WTC11 (cell line): ENCODE measurements at regions of chr7 and their contacts with region 1.

Region 1: GRCh38 chr7:28062197-28062991 is 118.2 kb downstream of the JAZF1 start:
- DNase-seq: peak; percentile 87
- ATAC-seq: peak; percentile 97
- H3K4me3 Mint-ChIP-seq: no peak overlapping the region
- H3K27ac Mint-ChIP-seq: peak overlapping the region; percentile 77
- H3K4me1 Mint-ChIP-seq: peaks cover 48% of the 10 kb centered on the region
- H3K27me3 Mint-ChIP-seq: no peaks in the 10 kb centered on the region
- CTCF ChIP-seq: peak; percentile 52; the same call in 1 of the 2 replicates

Region 2: DNA sequence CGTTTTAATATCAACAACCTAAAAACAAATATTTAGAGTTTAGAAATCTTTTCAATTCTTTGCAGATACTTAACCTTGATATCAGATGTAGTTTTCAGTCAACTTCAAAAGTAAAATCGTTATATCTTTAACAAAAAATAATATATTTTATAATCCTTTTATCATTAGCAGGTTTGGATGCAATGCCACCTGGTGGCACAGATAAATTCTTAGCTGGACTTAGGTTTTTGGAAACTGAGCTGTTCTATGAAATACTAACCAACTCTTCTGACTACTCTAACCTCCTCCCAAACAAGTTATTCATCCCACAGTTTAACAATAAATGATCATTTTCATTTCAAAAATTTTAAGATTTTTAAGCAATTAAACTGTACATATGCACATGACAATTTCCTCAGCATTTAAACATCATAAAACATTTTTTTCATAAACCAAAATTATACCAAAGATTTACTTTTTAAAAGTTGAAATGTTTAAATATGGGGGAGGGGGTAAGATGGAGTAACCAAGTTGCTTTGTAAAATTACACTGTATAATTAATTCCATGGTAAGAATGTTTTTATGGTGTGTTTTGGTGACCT is 456.6 kb before region 1 on chr7:
- CTCF ChIA-PET with region 1: interaction called, 10 read pairs
- POLR2A ChIA-PET with region 1: no interaction called
- DNase-seq: no peak
- ATAC-seq: no peak
- H3K4me3 Mint-ChIP-seq: no peak overlapping the region
- H3K27ac Mint-ChIP-seq: no peak overlapping the region
- H3K4me1 Mint-ChIP-seq: peaks cover 65% of the 10 kb centered on the region
- H3K27me3 Mint-ChIP-seq: no peaks in the 10 kb centered on the region
- CTCF ChIP-seq: no peak

Region 3: DNA sequence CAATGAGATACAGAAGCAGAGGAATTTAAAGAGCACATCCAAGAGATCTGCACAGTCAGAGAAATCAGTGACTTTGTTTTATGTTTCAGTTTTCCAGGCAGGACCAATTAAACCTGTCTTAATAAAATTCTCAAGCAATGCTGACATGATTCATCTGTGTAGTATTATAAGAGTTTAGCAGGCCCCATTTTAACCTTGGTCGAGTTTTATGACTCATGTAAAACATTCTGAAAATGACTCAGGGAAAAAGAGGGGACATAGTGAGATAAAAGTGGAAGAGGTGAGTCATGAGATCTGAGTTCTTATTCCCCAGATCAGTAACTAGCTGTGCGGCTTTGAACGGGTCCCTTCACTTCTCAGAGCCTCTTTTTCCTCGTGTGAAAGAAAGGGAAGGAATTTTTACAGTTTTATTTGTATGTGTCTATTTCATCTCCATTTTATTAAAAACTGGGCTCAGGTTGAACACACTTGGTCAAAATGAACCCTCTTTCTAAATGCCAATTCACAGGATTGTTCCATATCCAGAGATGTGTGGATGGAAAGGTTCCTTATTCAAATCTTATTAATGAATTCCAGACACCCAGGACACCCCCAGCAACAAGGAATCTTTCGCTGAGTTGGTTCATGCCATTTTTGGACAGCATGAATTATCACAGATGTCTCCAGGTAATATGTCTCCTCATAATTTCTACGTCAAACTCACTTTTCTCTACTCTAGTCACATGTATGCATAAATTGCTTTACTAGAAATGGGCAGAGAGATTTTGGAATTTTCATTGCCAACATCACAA is 25.0 kb before region 1 on chr7:
- CTCF ChIA-PET with region 1: interaction called, 18 read pairs
- POLR2A ChIA-PET with region 1: no interaction called
- DNase-seq: no peak
- ATAC-seq: no peak
- H3K4me3 Mint-ChIP-seq: no peak overlapping the region
- H3K27ac Mint-ChIP-seq: no peak overlapping the region
- H3K4me1 Mint-ChIP-seq: peaks cover 32% of the 10 kb centered on the region
- H3K27me3 Mint-ChIP-seq: no peaks in the 10 kb centered on the region; the same call in 1 of the 2 replicates
- CTCF ChIP-seq: no peak

Region 4: GRCh38 chr7:28044825-28045224 is 17.6 kb before region 1 on chr7:
- CTCF ChIA-PET with region 1: interaction called, 28 read pairs
- POLR2A ChIA-PET with region 1: no interaction called
- DNase-seq: no peak
- ATAC-seq: peak; percentile 94
- H3K4me3 Mint-ChIP-seq: no peak overlapping the region
- H3K27ac Mint-ChIP-seq: no peak overlapping the region
- H3K4me1 Mint-ChIP-seq: peaks cover 21% of the 10 kb centered on the region
- H3K27me3 Mint-ChIP-seq: no peaks in the 10 kb centered on the region
- CTCF ChIP-seq: no peak

Region 5: DNA sequence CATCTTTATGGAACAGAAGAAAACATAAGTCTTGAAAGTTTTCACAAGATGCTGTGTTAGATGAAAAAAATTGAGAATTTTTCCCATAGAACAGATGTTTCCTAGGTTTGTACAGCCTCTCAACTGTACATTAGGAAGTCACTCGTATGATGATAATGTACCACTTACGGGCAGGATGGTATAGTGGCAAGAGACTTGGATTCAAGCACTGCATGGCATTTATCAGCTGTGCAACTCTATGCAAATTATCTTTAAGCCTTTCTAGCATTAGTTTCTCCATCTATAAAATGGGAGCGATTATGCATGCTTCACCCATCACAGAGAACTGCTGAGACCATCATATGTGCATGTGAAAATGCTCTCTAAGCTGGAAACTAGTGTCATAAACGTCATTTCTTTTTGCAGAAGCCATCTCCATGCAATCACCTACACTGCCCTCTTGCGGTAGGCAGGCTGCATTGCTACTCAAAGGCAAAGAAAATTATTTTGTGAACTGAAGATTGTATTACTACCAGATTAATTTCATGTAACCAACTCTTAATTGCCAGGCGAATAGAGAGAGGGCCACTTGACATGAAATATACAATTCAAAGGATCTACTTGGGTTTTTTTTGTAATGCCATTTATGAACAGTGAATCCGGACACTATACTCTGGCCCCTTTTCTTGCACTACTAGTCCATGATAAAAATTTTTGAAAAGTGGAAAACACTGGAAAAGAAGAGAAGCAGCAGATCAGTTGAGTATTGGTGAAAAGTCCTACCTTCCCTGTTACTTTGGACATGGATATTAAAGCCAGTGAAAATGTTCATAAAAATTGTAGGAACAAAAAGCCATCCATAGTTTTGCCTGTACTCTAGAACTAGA is 15.9 kb after region 1 on chr7:
- CTCF ChIA-PET with region 1: interaction called, 248 read pairs
- POLR2A ChIA-PET with region 1: no interaction called
- DNase-seq: peak; percentile 33
- ATAC-seq: no peak
- H3K4me3 Mint-ChIP-seq: no peak overlapping the region
- H3K27ac Mint-ChIP-seq: no peak overlapping the region
- H3K4me1 Mint-ChIP-seq: peaks cover 30% of the 10 kb centered on the region
- H3K27me3 Mint-ChIP-seq: no peaks in the 10 kb centered on the region
- CTCF ChIP-seq: peak; percentile 96

Region 6: GRCh38 chr7:28088901-28089714 is 26.7 kb after region 1 on chr7:
- CTCF ChIA-PET with region 1: interaction called, 307 read pairs
- POLR2A ChIA-PET with region 1: no interaction called
- DNase-seq: no peak
- ATAC-seq: no peak
- H3K4me3 Mint-ChIP-seq: no peak overlapping the region
- H3K27ac Mint-ChIP-seq: no peak overlapping the region
- H3K4me1 Mint-ChIP-seq: peaks cover 29% of the 10 kb centered on the region
- H3K27me3 Mint-ChIP-seq: no peaks in the 10 kb centered on the region
- CTCF ChIP-seq: no peak

Region 7: DNA sequence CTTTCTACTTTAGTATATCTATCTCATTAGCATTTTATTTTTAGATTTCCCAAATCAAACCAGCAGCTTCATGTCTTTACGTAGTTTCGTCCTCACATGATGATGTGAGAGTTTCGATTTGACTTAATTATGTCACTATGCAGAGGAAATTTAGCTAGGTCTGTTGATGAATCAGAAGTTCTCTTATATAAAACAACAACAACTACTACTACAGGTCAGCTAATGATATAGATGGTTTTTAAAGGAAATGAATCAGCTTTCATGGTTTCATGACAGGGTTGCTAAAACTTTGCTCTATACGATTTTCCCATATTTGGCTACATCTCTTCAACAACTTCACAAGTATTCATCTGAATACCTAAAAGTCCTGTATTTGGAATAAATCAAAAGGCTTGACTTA is 89.6 kb after region 1 on chr7:
- CTCF ChIA-PET with region 1: no interaction called
- POLR2A ChIA-PET with region 1: no interaction called
- DNase-seq: no peak
- ATAC-seq: no peak
- H3K4me3 Mint-ChIP-seq: no peak overlapping the region
- H3K27ac Mint-ChIP-seq: no peak overlapping the region
- H3K4me1 Mint-ChIP-seq: peaks cover 34% of the 10 kb centered on the region
- H3K27me3 Mint-ChIP-seq: no peaks in the 10 kb centered on the region
- CTCF ChIP-seq: no peak